ENCODE measurements at regions of chr9 and their contacts with region 1.

Region 1: DNA sequence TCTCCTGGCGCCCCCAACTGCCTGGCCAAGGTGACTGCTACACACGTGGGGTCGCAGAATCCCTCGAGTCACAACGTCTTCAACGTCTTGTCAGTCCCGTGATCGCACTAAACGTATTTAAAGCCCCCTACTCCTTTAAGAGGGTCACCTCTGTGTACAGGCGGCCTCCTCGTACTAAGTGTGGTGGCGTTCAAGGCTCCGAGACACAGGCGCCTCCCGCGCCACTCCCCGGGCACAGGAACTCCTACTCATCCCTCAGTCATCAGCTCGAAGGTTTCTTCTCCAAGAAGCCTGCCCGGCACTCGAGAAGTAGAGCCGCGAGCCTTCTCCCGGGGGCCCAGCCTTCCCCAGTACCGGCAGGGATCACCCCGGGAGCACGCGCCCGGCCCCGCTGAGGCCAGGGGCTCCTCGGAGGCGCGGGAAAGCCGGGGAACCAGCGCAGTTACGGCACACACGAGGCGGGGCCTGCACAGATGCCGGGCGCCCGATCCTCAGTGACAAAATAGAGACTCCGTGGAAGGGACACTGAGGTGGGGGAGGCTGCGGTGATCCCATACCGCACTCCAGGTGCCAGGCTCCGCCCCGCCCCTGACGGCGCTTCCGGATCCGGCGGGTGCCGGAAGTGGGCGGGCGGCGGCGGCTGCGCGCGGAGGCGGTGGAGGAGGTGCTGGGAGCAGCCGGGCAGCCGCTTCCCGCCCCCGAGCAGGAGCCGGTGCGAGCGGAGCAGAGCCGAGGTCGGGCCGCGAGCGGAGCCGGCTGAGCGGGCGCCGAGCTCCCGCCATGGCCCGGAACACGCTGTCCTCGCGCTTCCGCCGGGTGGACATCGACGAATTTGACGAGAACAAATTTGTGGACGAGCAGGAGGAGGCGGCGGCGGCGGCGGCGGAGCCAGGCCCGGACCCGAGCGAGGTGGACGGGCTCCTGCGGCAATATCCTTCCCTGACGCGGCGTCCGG is 6.9 kb downstream of the ARPC5L start:
- DNase-seq: peak; percentile 96
- ATAC-seq: peak; percentile 59
- H3K4me3 Mint-ChIP-seq: peak overlapping the region; percentile 98
- H3K27ac Mint-ChIP-seq: peak overlapping the region; percentile 98
- H3K4me1 Mint-ChIP-seq: peaks cover 42% of the 10 kb centered on the region
- H3K27me3 Mint-ChIP-seq: no peaks in the 10 kb centered on the region

Region 2: GRCh38 chr9:124852829-124853531 is 15.8 kb before region 1 on chr9 and contains the start of gene WDR38:
- CTCF ChIA-PET with region 1: interaction called, 21 read pairs
- POLR2A ChIA-PET with region 1: interaction called, 14 read pairs
- intact Hi-C with region 1: no loop called
- DNase-seq: peak; percentile 85
- ATAC-seq: peak; percentile 88
- H3K4me3 Mint-ChIP-seq: peak within 1 kb of the TSS; percentile 46
- H3K27ac Mint-ChIP-seq: no peak within 1 kb of the TSS
- H3K4me1 Mint-ChIP-seq: peaks cover 16% of the 10 kb centered on the region
- H3K27me3 Mint-ChIP-seq: peaks cover 10% of the 10 kb centered on the region
- total RNA-seq, gene WDR38: not detected

Region 3: DNA sequence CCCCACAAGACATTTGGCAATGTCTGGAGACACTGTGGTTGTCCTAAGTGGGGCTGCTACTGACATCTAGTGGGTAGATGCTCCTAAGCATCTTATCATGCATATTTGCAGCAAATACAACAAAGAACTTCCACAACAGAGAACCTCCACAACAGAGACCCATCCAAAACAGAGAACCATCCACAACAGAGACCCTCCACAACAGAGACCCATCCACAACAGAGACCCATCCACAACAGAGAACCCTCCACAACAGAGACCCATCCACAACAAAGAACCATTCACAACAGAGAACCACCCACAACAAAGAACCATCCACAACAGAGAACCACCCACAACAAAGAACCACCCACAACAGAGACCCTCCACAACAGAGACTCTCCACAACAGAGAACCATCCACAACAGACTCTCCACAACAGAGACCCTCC is 26.0 kb after region 1 on chr9:
- CTCF ChIA-PET with region 1: no interaction called
- POLR2A ChIA-PET with region 1: no interaction called
- intact Hi-C with region 1: loop called in 1 of 2 experiments (anchors 2 kb)
- DNase-seq: peak; percentile 49
- ATAC-seq: peak; percentile 77
- H3K4me3 Mint-ChIP-seq: no peak overlapping the region
- H3K27ac Mint-ChIP-seq: no peak overlapping the region
- H3K4me1 Mint-ChIP-seq: peaks cover 10% of the 10 kb centered on the region
- H3K27me3 Mint-ChIP-seq: no peaks in the 10 kb centered on the region

Region 4: GRCh38 chr9:124940693-124941453 is 72.1 kb after region 1 on chr9 and contains the start of gene GOLGA1:
- CTCF ChIA-PET with region 1: no interaction called
- POLR2A ChIA-PET with region 1: interaction called, 4 read pairs
- intact Hi-C with region 1: loop called (anchors 1 to 2 kb)
- DNase-seq: peak; percentile 96
- ATAC-seq: peak; percentile 89
- H3K4me3 Mint-ChIP-seq: peak within 1 kb of the TSS; percentile 93
- H3K27ac Mint-ChIP-seq: peak within 1 kb of the TSS; percentile 99
- H3K4me1 Mint-ChIP-seq: peaks cover 20% of the 10 kb centered on the region
- H3K27me3 Mint-ChIP-seq: no peaks in the 10 kb centered on the region
- total RNA-seq, gene GOLGA1: 17.4 to 18.3 TPM

Region 5: GRCh38 chr9:125189361-125190289 is 320.8 kb after region 1 on chr9 and contains the start of gene PPP6C:
- CTCF ChIA-PET with region 1: no interaction called
- POLR2A ChIA-PET with region 1: no interaction called
- intact Hi-C with region 1: loop called (anchors 1 to 2 kb)
- DNase-seq: peak; percentile 99
- ATAC-seq: peak; percentile 96
- H3K4me3 Mint-ChIP-seq: peak within 1 kb of the TSS; percentile 83
- H3K27ac Mint-ChIP-seq: peak within 1 kb of the TSS; percentile 86
- H3K4me1 Mint-ChIP-seq: peaks cover 69% of the 10 kb centered on the region
- H3K27me3 Mint-ChIP-seq: no peaks in the 10 kb centered on the region
- total RNA-seq, gene PPP6C: 35.1 to 47.3 TPM

Region 6: DNA sequence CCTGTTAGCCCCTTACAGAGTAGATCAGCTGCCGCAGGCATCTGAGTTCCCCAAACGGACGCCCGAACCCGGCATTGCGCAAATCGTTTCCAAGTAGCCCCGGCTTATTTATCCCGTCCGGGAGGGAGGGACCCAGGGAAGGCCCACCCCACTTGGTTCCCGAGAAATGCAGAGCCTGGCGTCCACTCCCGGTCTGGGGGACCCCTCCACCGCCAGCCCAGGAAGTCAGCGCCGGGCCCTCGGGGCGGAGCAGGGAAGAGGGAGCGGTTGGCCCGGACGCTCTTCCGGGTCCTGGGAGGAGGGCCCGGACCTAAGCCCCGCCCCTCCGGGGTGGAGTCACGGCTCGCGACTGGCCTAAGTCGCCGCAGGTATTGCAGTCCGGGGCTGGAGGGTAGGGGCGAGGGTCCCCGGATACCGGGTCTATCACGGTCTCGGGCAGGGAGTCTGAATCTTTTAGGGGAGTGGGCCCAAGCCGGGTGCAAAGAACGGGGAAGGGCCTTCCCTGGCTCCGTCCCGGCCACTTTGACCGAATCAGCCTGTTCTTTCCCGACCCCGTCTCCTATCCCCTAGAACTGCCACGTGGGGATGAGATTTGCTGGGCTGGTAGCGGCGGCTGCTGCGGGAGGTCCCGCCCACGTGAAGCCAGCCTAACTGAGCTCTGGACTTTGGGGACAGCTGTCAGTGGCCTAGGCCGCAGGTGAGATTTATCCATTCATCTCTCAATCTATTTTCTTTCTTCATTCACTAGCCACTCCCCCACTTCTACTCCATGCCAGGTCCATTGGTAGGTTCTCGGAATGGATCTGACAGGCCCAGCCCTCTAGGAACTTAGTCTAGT is 331.6 kb after region 1 on chr9 and contains the start of gene RABEPK:
- CTCF ChIA-PET with region 1: no interaction called
- POLR2A ChIA-PET with region 1: interaction called, 6 read pairs
- intact Hi-C with region 1: loop called in 1 of 2 experiments (anchors 1 kb)
- DNase-seq: peak; percentile 95
- ATAC-seq: peak; percentile 98
- H3K4me3 Mint-ChIP-seq: peak within 1 kb of the TSS; percentile 83
- H3K27ac Mint-ChIP-seq: peak within 1 kb of the TSS; percentile 80
- H3K4me1 Mint-ChIP-seq: peaks cover 30% of the 10 kb centered on the region
- H3K27me3 Mint-ChIP-seq: no peaks in the 10 kb centered on the region
- total RNA-seq, gene RABEPK: 29.1 to 33.1 TPM

Region 7: GRCh38 chr9:125261501-125262293 is 392.9 kb after region 1 on chr9 and contains the start of gene GAPVD1:
- CTCF ChIA-PET with region 1: no interaction called
- POLR2A ChIA-PET with region 1: no interaction called
- intact Hi-C with region 1: loop called in 1 of 2 experiments (anchors 1 kb)
- DNase-seq: peak; percentile 94
- ATAC-seq: peak; percentile 99
- H3K4me3 Mint-ChIP-seq: peak within 1 kb of the TSS; percentile 99
- H3K27ac Mint-ChIP-seq: peak within 1 kb of the TSS; percentile 96
- H3K4me1 Mint-ChIP-seq: peaks cover 43% of the 10 kb centered on the region
- H3K27me3 Mint-ChIP-seq: no peaks in the 10 kb centered on the region
- total RNA-seq, gene GAPVD1: 41.6 to 47.7 TPM

Region 8: DNA sequence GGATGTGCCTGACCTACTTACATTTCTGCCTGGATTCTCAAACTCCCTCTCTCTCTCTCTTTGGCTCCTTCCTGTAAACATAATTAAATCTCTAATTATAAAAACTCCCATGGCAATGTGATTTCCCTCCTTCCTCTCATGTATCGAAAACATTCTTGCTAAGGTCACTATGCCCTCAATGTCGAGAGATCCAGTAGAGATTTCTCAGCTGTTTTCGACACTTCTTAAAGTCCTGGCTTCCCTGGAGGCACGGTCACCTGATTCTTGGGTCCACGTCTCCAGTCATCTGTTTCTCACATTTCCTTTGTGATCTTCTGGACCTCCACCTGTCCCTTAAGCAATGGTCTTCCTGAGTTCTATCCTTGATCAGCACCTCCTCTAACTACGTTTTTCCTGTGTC is 582.2 kb after region 1 on chr9:
- CTCF ChIA-PET with region 1: no interaction called
- POLR2A ChIA-PET with region 1: no interaction called
- intact Hi-C with region 1: no loop called
- DNase-seq: no peak
- ATAC-seq: no peak
- H3K4me3 Mint-ChIP-seq: no peak overlapping the region
- H3K27ac Mint-ChIP-seq: no peak overlapping the region
- H3K4me1 Mint-ChIP-seq: no peaks in the 10 kb centered on the region
- H3K27me3 Mint-ChIP-seq: no peaks in the 10 kb centered on the region